ENCODE measurements at regions of chr20 and their contacts with region 1.

Region 1: DNA sequence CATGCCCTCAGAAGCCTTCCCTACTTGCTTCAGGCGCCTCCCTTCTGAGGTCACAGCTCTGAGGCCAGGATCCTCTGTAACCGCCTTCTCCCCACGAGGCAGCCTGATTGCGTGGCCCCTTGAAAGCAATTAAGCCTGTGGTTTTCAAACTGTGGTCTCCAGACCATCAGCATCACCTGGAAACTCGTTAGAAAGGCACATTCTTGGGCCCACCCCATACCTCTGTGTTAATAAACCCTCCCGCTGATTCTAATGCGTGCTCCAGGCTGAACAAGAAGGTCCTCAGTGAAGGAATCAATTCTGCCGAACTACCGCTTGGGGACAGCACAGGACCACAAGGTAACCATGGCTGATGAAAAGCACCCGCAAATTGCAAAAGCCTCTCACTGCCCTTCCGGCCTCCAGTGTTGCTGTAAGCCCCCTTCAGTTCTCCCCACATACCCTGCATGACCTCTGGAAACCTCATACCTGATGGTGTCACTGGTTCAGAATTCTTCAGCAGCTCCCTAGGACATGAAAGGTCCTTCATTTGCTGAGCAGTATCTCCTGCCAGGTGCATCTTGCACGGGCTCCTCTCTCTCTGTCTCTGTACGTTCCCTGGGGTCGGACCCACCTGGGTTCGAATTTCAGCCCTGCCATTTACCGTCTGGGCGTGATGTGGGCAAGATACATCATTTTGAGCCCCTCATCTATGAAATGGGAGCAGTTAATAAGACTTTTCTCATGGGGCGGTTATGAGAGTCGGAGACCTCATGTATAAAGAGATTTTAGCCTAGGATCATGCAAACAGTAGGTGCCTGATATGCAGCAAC is 93.3 kb upstream of the RNF24 start:
- DNase-seq: peak; percentile 71 to 83 (median 78)
- ATAC-seq: peak; percentile 82
- H3K4me3 ChIP-seq: no peak overlapping the region
- H3K27ac ChIP-seq: no peak overlapping the region
- H3K4me1 ChIP-seq: no peaks in the 10 kb centered on the region
- H3K27me3 ChIP-seq: no peaks in the 10 kb centered on the region
- CTCF ChIP-seq: peak; percentile 93 to 99 (median 98)
- POLR2A ChIP-seq: no peak

Region 2: DNA sequence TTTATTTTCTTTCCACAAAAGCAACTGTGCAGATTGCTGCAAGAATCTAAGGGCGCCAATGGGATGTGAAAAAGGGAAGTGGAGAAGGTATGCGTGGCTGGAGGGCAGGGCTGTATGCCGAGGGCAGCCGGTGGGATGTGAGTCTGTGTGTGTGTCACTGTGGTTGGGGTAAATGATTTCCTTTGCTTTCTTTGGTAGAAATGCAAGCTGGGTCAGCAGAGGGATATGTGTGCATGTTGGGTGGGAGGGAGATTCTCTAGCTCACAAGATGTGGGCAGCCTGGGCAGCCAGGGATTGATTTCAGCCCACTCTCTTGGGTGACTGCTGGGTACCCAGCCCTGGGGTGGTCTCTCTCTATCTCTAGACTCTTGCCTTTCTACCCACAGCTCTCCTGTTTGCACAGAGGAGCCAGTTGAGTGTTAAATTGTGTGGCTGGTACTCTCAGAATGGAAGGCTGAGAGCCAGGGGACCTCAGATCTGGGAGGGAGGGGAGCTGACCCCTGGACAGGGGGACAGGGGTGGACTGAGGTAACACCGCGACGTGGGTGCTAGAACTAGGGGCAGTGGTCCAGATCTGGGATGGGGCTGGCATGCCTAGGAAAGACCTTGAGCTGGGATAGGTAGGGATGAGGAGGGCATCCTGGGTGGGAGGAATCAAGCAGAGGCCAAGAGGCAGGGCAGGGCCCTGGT is 43.5 kb after region 1 on chr20:
- intact Hi-C with region 1: no loop called
- DNase-seq: peak in 1 of 4 donors; percentile 43
- ATAC-seq: no peak
- H3K4me3 ChIP-seq: no peak overlapping the region
- H3K27ac ChIP-seq: no peak overlapping the region
- H3K4me1 ChIP-seq: peaks cover 31% of the 10 kb centered on the region
- H3K27me3 ChIP-seq: no peaks in the 10 kb centered on the region
- CTCF ChIP-seq: no peak
- POLR2A ChIP-seq: no peak

Region 3: GRCh38 chr20:4174909-4175308 is 66.2 kb after region 1 on chr20:
- intact Hi-C with region 1: loop called (anchors 5 kb)
- DNase-seq: no peak
- ATAC-seq: no peak
- H3K4me3 ChIP-seq: no peak overlapping the region
- H3K27ac ChIP-seq: no peak overlapping the region
- H3K4me1 ChIP-seq: peaks cover 20% of the 10 kb centered on the region
- H3K27me3 ChIP-seq: no peaks in the 10 kb centered on the region
- CTCF ChIP-seq: no peak
- POLR2A ChIP-seq: no peak

Measured in body of pancreas (tissue), 4 donors.